B cell (primary cell): ENCODE measurements at regions of chr6 and their contacts with region 1.

Region 1: GRCh38 chr6:75893058-75893775 is 144.2 kb downstream of the MYO6 start:
- DNase-seq: peak; percentile 38
- ATAC-seq: no peak
- H3K4me3 ChIP-seq: no peak overlapping the region
- H3K4me3 Mint-ChIP-seq: no peak overlapping the region
- H3K27ac ChIP-seq: no peak overlapping the region
- H3K27ac Mint-ChIP-seq: no peak overlapping the region
- H3K4me1 ChIP-seq: no peaks in the 10 kb centered on the region
- H3K4me1 Mint-ChIP-seq: no peaks in the 10 kb centered on the region
- H3K27me3 ChIP-seq: no peaks in the 10 kb centered on the region
- H3K27me3 Mint-ChIP-seq: no peaks in the 10 kb centered on the region
- CTCF ChIP-seq: peak; percentile 85

Region 2: DNA sequence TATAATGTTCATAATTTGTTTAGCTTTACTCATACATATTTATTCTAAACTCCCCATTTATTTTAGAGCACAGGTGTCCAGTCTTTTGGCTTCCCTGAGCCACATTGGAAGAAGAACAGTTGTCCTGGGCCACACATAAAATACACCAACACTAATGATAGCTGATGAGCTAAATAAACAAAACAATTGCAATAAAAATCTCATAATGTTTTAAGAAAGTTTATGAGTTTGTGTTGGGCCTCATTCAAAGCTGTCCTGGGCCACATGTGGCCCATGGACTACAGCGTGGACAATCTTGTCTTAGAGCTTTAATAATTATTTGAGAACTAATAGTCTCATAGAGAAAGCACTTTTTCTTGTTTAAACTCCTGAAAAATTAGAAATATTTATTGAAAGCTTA is 12.9 kb before region 1 on chr6:
- CTCF ChIA-PET with region 1: interaction called, 17 read pairs
- POLR2A ChIA-PET with region 1: no interaction called
- intact Hi-C with region 1: no loop called
- DNase-seq: no peak
- ATAC-seq: no peak
- H3K4me3 ChIP-seq: no peak overlapping the region
- H3K4me3 Mint-ChIP-seq: no peak overlapping the region
- H3K27ac ChIP-seq: no peak overlapping the region
- H3K27ac Mint-ChIP-seq: no peak overlapping the region
- H3K4me1 ChIP-seq: no peaks in the 10 kb centered on the region
- H3K4me1 Mint-ChIP-seq: no peaks in the 10 kb centered on the region
- H3K27me3 ChIP-seq: no peaks in the 10 kb centered on the region
- H3K27me3 Mint-ChIP-seq: peaks cover 4% of the 10 kb centered on the region
- CTCF ChIP-seq: no peak